GM12878 (cell line): ENCODE measurements at regions of chr4 and their contacts with region 1.

Region 1: DNA sequence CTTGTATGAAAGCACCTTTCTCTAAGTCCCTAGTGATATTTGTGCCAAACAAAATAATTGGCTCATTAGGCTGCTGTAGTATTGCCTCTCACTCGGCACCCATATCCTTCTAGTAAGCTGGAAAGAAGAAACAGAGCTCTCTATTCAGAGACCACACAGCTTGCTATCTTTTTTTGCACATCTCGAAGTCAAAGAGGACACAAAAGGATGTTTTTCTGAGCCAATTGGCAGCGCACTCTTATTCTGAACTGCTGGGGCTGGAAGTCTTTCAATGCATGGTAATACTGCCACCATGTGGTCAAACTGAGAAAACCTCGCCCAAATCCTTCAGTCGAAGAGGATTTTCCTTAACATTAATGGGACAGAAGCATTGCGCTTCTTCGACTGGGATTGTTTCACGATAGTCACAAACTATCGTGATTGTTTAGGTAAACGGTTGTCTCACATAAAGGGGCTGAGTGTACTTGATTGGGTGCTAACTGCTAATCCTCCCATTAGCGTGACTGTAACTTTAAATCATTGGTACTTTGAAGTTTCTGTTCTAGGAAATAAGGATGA is 572.0 kb upstream of the LCORL start:
- DNase-seq: peak; percentile 7
- ATAC-seq: peak; percentile 85
- H3K4me3 ChIP-seq: no peak overlapping the region
- H3K27ac ChIP-seq: no peak overlapping the region
- H3K4me1 ChIP-seq: no peaks in the 10 kb centered on the region
- H3K27me3 ChIP-seq: no peaks in the 10 kb centered on the region
- CTCF ChIP-seq: peak; percentile 65 to 83 (median 74)
- EP300 ChIP-seq: no peak
- POLR2A ChIP-seq: no peak
- RAD21 ChIP-seq: peak; percentile 94

Region 2: GRCh38 chr4:17636696-17637622 is 956.6 kb before region 1 on chr4:
- CTCF ChIA-PET with region 1: no interaction called
- POLR2A ChIA-PET with region 1: no interaction called
- RAD21 ChIA-PET with region 1: no interaction called
- SMC1A ChIA-PET with region 1: no interaction called
- in situ Hi-C with region 1: loop called (anchors 10 kb)
- intact Hi-C with region 1: loop called (anchors 5 kb)
- DNase-seq: no peak
- ATAC-seq: peak; percentile 99
- H3K4me3 ChIP-seq: no peak overlapping the region
- H3K27ac ChIP-seq: no peak overlapping the region
- H3K4me1 ChIP-seq: no peaks in the 10 kb centered on the region
- H3K27me3 ChIP-seq: no peaks in the 10 kb centered on the region
- CTCF ChIP-seq: peak; percentile 81 to 87 (median 81)
- EP300 ChIP-seq: no peak
- POLR2A ChIP-seq: peak; percentile 50
- RAD21 ChIP-seq: peak; percentile 80

Region 3: GRCh38 chr4:17762726-17763125 is 830.8 kb before region 1 on chr4:
- CTCF ChIA-PET with region 1: no interaction called
- POLR2A ChIA-PET with region 1: no interaction called
- RAD21 ChIA-PET with region 1: no interaction called
- SMC1A ChIA-PET with region 1: no interaction called
- in situ Hi-C with region 1: no loop called
- intact Hi-C with region 1: loop called (anchors 5 kb)
- DNase-seq: no peak
- ATAC-seq: peak; percentile 48; the same call in 2 of the 3 replicates
- H3K4me3 ChIP-seq: no peak overlapping the region
- H3K27ac ChIP-seq: no peak overlapping the region
- H3K4me1 ChIP-seq: no peaks in the 10 kb centered on the region
- H3K27me3 ChIP-seq: no peaks in the 10 kb centered on the region
- CTCF ChIP-seq: peak; percentile 35 to 50 (median 42); a peak in 4 of 6 replicates
- EP300 ChIP-seq: no peak
- POLR2A ChIP-seq: no peak
- RAD21 ChIP-seq: peak; percentile 46

Region 4: DNA sequence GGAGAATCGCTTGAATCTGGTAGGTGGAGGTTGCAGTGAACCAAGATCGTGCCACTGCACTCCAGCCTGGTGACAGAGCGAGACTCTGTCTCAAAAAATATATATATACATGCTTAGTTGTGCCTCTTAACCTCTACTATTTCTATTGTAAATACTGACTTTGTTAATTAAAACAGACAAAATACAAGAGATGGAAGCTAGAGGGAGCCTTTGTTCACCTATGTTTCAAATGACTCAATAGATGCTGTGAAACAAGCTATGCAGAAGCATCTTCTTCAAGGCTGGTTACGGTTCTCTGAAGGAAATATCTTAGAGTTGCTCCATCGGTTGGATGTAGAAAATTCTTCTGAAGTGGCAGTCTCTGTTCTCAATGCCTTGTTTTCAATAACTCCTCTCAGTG is 776.5 kb before region 1 on chr4:
- CTCF ChIA-PET with region 1: interaction called, 27 read pairs
- POLR2A ChIA-PET with region 1: no interaction called
- RAD21 ChIA-PET with region 1: interaction called, 19 read pairs
- SMC1A ChIA-PET with region 1: interaction called, 23 read pairs
- in situ Hi-C with region 1: loop called (anchors 5 kb)
- intact Hi-C with region 1: loop called (anchors 1 kb)
- DNase-seq: peak; percentile 41
- ATAC-seq: peak; percentile 83
- H3K4me3 ChIP-seq: no peak overlapping the region
- H3K27ac ChIP-seq: no peak overlapping the region
- H3K4me1 ChIP-seq: no peaks in the 10 kb centered on the region
- H3K27me3 ChIP-seq: no peaks in the 10 kb centered on the region; a peak in 1 of 4 replicates
- CTCF ChIP-seq: peak; percentile 37 to 63 (median 61); a peak in 5 of 6 replicates
- EP300 ChIP-seq: no peak
- POLR2A ChIP-seq: no peak
- RAD21 ChIP-seq: peak; percentile 82

Region 5: GRCh38 chr4:17934286-17934685 is 659.2 kb before region 1 on chr4:
- CTCF ChIA-PET with region 1: no interaction called
- POLR2A ChIA-PET with region 1: no interaction called
- RAD21 ChIA-PET with region 1: no interaction called
- SMC1A ChIA-PET with region 1: no interaction called
- in situ Hi-C with region 1: no loop called
- intact Hi-C with region 1: loop called (anchors 5 kb)
- DNase-seq: no peak
- ATAC-seq: no peak
- H3K4me3 ChIP-seq: no peak overlapping the region
- H3K27ac ChIP-seq: no peak overlapping the region
- H3K4me1 ChIP-seq: no peaks in the 10 kb centered on the region
- H3K27me3 ChIP-seq: no peaks in the 10 kb centered on the region
- CTCF ChIP-seq: no peak; a peak in 1 of 6 replicates
- EP300 ChIP-seq: no peak
- POLR2A ChIP-seq: no peak
- RAD21 ChIP-seq: no peak

Region 6: DNA sequence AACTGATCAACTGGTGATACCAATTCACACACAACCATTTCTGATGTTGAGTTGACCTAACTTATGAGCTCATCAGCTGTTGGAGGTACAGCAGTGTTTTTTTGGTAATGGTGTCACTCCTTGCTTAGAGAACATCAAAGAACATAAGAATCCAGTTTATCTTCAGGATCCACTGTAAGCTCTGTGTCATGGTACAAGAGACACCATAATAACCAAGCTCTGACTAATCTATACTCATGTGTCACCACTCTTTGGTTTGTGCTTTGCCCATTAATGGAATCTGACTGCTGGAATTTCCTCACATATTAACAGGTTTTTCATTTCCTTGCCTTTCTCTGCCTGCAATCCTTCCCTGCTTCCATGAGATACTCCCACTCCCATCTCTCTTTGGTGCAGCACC is 163.1 kb after region 1 on chr4:
- CTCF ChIA-PET with region 1: no interaction called
- POLR2A ChIA-PET with region 1: no interaction called
- RAD21 ChIA-PET with region 1: no interaction called
- SMC1A ChIA-PET with region 1: no interaction called
- in situ Hi-C with region 1: no loop called
- intact Hi-C with region 1: no loop called
- DNase-seq: no peak
- ATAC-seq: no peak
- H3K4me3 ChIP-seq: no peak overlapping the region
- H3K27ac ChIP-seq: no peak overlapping the region
- H3K4me1 ChIP-seq: no peaks in the 10 kb centered on the region
- H3K27me3 ChIP-seq: no peaks in the 10 kb centered on the region
- CTCF ChIP-seq: no peak
- EP300 ChIP-seq: no peak
- POLR2A ChIP-seq: no peak
- RAD21 ChIP-seq: no peak